Upper lobe of right lung (tissue), 1 donor: ENCODE measurements at regions of chr3 and their contacts with region 1.

Region 1: GRCh38 chr3:172511783-172512762 is 11.2 kb downstream of the TNFSF10 start:
- DNase-seq: peak; percentile 86
- ATAC-seq: peak; percentile 96
- H3K4me3 ChIP-seq: no peak overlapping the region
- H3K27ac ChIP-seq: peak overlapping the region; percentile 65
- H3K4me1 ChIP-seq: peaks cover 49% of the 10 kb centered on the region
- H3K27me3 ChIP-seq: no peaks in the 10 kb centered on the region
- CTCF ChIP-seq: no peak

Region 2: DNA sequence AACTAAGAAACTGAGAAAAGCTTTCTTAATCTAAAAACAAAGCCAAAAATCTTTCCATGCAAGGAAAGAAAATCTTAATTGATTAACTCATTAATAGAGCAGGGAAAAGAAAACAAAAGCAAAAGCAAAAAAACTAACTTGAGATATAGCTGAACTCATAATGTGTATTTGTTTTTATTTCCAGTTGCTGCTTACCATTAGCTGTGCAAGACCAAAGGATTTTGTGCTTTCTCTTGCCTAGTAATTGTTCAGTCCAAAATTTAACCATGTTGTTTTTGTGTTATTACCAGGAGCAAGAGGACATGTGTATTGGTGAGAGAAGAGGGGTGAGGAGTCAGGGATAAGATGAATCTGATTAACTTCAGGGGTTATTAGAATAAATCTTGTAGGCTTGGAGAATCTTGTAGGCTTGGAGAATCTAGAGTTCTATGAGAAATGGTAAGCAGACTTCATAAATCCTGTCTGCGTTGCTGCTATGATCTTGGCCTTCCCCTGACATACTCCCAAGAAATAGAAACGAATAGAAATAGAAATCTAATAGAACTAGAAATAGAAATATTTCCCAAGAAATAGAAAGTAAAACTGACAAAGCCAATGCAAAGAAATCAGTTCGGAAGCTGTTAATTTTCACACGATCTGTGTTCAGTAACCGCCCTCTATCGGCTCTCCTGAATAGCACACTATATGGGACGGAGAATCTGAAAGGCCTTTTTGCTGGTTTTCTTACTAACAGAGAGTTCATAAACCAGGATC is 83.7 kb after region 1 on chr3:
- intact Hi-C with region 1: loop called (anchors 10 kb)
- DNase-seq: no peak
- ATAC-seq: peak; percentile 84
- H3K4me3 ChIP-seq: peak overlapping the region; percentile 37
- H3K27ac ChIP-seq: peak overlapping the region; percentile 67
- H3K4me1 ChIP-seq: peaks cover 36% of the 10 kb centered on the region
- H3K27me3 ChIP-seq: no peaks in the 10 kb centered on the region
- CTCF ChIP-seq: peak; percentile 77